ENCODE measurements at regions of chr6 and their contacts with region 1.

Region 1: DNA sequence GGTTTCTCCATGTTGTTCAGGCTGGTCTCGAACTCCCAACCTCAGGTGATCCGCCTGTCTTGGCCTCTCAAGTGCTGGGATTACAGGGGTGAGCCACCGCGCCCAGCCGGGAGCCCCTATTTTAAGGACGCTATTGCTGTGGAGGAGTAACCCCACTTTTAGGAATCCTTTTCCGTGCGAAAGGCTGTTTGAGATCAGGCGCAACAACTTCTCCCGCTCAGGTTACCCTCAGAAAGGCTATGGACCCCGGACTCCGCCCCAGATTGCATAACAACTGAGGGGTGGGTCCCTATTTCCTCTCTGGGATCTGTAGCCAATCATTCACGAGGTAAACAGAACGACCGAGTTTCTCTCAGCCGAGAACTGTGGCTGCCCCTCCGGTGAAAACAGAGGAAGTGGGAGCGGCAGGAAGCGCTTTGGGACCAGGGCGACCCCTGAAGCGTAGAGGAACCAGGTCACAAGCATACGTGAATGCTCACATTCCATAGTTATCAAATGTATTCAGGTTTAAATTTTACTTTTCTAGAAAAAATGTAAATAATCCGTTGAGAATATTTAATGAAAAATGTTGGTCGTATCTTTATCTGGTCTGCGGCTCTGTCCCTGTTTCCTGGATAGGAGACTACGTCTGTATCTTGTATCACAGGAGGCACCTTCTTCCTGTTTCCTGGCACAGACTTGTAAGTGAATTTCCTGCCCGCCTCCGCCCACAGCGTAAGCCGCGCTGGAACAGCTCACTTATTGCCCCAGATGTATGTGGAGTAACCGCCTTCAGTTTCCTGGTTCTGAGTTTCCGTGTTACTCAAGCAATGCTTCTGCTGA is 26.8 kb downstream of the HLA-E start:
- DNase-seq: peak; percentile 59
- H3K4me3 ChIP-seq: peak overlapping the region; percentile 59
- CTCF ChIP-seq: no peak

Region 2: DNA sequence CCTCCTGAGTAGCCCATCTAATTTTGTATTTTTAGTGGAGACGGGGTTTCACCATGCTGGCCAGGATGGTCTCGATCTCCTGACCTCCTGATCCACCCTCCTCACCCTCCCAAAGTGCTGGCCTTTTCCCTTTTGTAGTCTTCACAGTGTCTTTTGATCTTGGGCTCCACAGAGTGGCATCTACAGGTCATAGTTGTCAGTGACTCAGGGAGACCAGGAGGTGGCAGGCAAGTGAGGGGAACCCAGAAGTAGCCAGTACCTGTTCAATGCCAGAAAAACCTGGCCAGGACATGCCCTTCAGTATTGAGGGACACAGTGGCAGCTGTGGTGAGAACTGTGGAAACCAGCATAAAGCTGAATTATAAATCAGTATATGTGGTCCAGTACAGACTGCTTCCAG is 151.6 kb before region 1 on chr6:
- CTCF ChIA-PET with region 1: no interaction called
- POLR2A ChIA-PET with region 1: no interaction called
- DNase-seq: no peak
- H3K4me3 ChIP-seq: no peak overlapping the region
- CTCF ChIP-seq: no peak

Region 3: DNA sequence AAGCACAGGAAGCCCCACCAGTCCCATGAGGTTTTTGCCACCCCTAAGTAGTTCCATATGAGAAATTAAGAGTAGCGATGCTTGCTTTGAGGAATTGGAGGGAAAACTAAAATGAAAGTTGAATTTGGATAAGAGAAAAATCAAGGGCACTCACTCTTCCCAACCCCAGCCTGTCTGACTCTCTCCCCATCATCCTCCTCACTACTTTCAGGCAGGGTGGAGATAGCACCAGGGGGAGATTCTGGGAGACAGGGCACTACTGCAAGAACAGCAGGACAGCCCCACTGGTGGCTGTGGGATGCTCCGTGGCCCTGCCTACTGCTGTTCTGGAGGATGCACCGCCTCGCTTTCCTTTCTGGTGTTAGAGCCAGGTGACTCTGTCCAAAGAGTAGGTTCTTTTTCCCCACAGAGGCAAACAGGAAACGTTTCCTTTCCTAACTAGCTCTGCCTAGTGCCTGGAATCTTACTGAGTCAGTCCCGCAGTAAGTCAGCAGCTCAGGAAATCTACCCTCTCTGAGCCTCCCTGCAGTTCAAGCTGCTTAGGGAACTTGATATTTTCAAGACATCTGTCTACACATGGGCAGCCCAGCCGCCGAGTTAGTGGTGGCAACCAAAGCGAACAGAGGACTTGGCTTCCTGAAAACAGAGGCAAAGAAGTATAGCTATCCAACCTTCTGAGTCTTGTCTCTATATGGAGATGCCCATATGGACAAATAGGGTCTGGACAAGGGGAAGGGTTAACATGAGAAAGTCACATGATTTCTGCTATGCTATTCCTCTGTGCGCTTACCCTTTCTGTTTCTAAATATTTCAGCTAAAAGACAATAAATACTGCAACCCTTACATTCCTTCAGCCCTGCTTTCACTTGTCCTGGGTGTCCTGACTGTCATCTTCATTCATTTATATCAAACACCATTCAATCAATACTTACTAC is 15.5 kb before region 1 on chr6:
- CTCF ChIA-PET with region 1: interaction called, 10 read pairs
- POLR2A ChIA-PET with region 1: no interaction called
- DNase-seq: no peak
- H3K4me3 ChIP-seq: no peak overlapping the region
- CTCF ChIP-seq: no peak

Region 4: DNA sequence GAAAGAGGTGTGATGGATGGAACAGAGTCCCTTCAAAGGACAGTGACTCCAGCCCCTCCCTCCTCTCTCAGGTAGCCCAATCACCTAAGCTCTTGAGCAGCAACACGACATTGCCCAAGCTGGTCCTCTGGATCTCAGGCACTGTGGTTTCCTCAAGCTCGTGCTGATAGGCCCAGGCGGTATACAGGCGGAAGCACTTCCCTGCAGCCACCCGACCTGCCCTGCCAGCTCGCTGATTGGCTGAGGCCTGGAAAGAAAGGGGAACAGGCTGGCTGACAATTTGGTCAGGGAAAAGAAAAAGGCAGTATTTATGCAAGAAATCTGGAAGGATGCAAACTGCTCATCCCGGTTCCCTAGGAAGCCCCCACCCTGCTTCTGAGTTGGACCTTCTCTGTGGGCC is 140.4 kb after region 1 on chr6:
- CTCF ChIA-PET with region 1: no interaction called
- POLR2A ChIA-PET with region 1: no interaction called
- DNase-seq: no peak
- H3K4me3 ChIP-seq: no peak overlapping the region
- CTCF ChIP-seq: no peak